CD4-positive, alpha-beta memory T cell (primary cell): ENCODE measurements at regions of chr3 and their contacts with region 1.

Region 1: DNA sequence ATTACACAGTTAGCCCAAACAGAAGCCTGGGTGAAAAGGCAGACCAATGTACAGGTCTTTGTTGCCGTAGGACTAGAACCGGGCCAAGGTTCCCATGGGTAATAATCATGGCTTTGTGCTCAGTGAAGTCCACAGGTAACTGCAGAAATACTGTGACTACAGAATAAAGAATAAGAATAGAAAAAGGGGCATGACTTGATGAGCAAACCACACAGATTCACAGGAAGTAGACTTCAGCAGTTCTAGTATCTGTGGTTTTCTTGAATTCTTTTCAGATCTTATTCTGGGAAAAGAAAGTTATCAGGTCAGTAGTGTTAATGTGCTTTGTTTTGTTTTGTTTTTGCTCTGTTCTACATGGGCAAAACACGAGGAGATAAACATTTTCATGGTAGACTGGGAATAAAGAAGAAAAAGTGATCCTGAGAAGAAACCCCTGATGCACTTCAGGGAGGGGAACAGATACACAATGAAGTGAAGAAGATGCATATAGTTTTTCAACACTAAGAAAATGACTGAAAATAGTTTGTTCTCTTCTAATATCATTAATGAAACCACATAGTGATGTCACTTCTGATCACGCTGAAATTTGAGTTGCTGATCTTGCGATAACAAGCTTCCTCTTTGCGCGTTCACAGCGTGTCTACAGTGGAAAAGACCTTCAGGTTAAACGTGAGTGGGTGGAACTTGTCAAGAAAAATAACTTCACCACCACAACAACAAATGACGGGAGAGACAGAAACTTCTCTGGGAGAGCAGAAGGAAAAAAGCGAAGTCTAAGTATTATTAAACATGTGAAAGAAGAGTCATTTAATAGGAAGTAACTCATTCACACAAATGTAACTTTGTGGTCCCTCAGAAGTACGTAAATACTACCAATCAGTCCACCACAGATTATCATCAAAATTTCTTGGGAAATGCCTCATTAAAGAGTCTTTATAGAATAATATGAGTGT is 315.8 kb upstream of the SATB1 start:
- DNase-seq: peak; percentile 78 to 87 (median 82)
- H3K4me3 ChIP-seq: peak overlapping the region in 1 of 2 donors; percentile 35
- H3K4me3 Mint-ChIP-seq: peak overlapping the region; percentile 69 to 87 (median 81)
- H3K27ac ChIP-seq: peak overlapping the region; percentile 60
- H3K27ac Mint-ChIP-seq: peak overlapping the region; percentile 88 to 97 (median 95)
- H3K4me1 ChIP-seq: peaks cover 79% of the 10 kb centered on the region
- H3K4me1 Mint-ChIP-seq: peaks cover 67 to 77% (median 72%) of the 10 kb centered on the region in 4 donors
- H3K27me3 ChIP-seq: no peaks in the 10 kb centered on the region
- H3K27me3 Mint-ChIP-seq: no peaks in the 10 kb centered on the region

Region 2: GRCh38 chr3:18717598-18717997 is 23.3 kb before region 1 on chr3:
- CTCF ChIA-PET with region 1: interaction called, 3 read pairs
- POLR2A ChIA-PET with region 1: interaction called, 24 read pairs
- intact Hi-C with region 1: no loop called
- DNase-seq: no peak
- H3K4me3 ChIP-seq: no peak overlapping the region
- H3K4me3 Mint-ChIP-seq: peak overlapping the region in 6 of 8 donors; percentile 14 to 66 (median 51)
- H3K27ac ChIP-seq: no peak overlapping the region
- H3K27ac Mint-ChIP-seq: peak overlapping the region; percentile 33 to 85 (median 61)
- H3K4me1 ChIP-seq: peaks cover 58% of the 10 kb centered on the region
- H3K4me1 Mint-ChIP-seq: peaks cover 50 to 68% (median 62%) of the 10 kb centered on the region in 4 donors
- H3K27me3 ChIP-seq: no peaks in the 10 kb centered on the region
- H3K27me3 Mint-ChIP-seq: no peaks in the 10 kb centered on the region

Region 3: GRCh38 chr3:18725668-18726407 is 15.1 kb before region 1 on chr3:
- CTCF ChIA-PET with region 1: interaction called, 11 read pairs
- POLR2A ChIA-PET with region 1: interaction called, 63 read pairs
- intact Hi-C with region 1: loop called (anchors 1 kb)
- DNase-seq: peak; percentile 56 to 74 (median 68)
- H3K4me3 ChIP-seq: peak overlapping the region in 1 of 2 donors; percentile 6
- H3K4me3 Mint-ChIP-seq: peak overlapping the region; percentile 56 to 80 (median 76)
- H3K27ac ChIP-seq: peak overlapping the region; percentile 53
- H3K27ac Mint-ChIP-seq: peak overlapping the region; percentile 92 to 99 (median 94)
- H3K4me1 ChIP-seq: peaks cover 74% of the 10 kb centered on the region
- H3K4me1 Mint-ChIP-seq: peaks cover 64 to 79% (median 72%) of the 10 kb centered on the region in 4 donors
- H3K27me3 ChIP-seq: no peaks in the 10 kb centered on the region
- H3K27me3 Mint-ChIP-seq: no peaks in the 10 kb centered on the region